ENCODE measurements at regions of chr14 and their contacts with region 1.

Region 1: GRCh38 chr14:99575043-99576023 is 28.7 kb downstream of the CCDC85C start:
- DNase-seq: no peak
- H3K4me3 ChIP-seq: no peak overlapping the region
- CTCF ChIP-seq: peak; percentile 30

Region 2: DNA sequence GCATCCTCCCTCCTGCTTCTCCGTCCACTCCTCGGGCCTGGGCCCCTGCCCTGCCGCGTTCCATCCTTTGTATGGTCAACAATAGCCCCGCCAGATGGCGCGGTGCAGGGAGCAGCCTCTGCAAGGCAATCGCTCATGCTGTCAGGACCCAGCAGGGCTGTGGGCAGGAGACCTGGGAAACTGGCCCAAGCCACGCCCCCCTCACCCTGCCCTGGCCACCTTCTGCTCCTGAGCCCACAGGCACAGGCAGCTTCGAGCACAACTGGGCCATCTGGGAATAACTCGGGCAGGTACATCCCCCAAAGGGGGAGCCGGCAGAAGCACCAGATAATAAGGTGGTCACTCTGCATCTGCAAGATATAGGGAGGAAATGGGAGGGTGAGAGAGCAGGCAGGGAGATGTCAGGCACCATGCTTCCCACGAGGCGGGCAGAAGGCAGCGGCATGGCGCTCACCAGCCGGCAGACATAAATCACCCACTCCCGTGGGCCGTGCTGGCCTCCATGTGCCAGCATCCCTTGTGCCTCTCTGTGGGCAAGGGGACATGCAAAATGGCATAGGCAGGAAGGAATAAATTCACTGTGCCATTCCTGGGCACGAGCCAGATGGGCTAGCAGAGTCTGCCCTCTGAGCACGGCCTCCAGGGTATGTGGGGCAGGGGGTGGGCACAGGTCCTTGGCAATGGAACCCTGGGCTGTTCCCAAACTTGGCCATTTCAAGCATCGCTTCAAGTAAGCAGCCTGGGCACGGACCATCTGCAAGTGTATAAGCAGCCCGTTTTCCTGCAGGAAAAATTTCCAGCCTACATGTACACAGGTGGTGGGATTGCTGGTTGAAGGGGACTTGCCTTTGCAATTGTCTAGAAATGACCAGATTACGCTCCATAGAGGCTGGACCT is 11.9 kb before region 1 on chr14:
- CTCF ChIA-PET with region 1: interaction called, 10 read pairs
- POLR2A ChIA-PET with region 1: interaction called, 3 read pairs
- DNase-seq: no peak
- H3K4me3 ChIP-seq: no peak overlapping the region
- CTCF ChIP-seq: peak; percentile 61

Region 3: GRCh38 chr14:100383727-100384158 is 808.4 kb after region 1 on chr14:
- CTCF ChIA-PET with region 1: no interaction called
- POLR2A ChIA-PET with region 1: no interaction called
- DNase-seq: no peak
- H3K4me3 ChIP-seq: no peak overlapping the region
- CTCF ChIP-seq: peak; percentile 93

Measured in AG04449 (cell line).